MCF 10A (cell line): ENCODE measurements at regions of chr1 and their contacts with region 1.

Region 1: DNA sequence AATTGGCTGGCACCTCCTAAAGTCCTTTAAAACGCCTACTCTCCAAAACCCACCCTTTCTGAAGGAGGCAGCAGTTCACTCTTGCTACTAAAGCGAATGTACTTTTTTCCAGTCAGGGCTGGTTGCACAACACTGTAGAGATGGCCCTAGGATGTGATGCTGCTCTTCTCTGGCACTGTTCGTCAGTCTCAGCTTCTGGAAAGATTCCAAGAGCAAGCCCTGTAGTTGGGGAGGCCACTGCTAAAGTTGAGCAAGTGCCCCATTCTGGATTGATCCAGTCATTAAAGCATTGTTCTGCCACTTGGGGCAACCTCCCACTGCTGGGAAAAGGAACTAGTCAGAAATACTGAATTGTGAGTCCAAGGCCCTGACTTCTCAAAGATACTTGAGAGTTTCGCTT is 28.5 kb upstream of the KCNQ4 start:
- DNase-seq: peak; percentile 96
- H3K4me3 Mint-ChIP-seq: no peak overlapping the region
- H3K27ac Mint-ChIP-seq: peak overlapping the region; percentile 53
- H3K4me1 Mint-ChIP-seq: peaks cover 29% of the 10 kb centered on the region
- H3K27me3 Mint-ChIP-seq: no peaks in the 10 kb centered on the region
- CTCF ChIP-seq: no peak

Region 2: DNA sequence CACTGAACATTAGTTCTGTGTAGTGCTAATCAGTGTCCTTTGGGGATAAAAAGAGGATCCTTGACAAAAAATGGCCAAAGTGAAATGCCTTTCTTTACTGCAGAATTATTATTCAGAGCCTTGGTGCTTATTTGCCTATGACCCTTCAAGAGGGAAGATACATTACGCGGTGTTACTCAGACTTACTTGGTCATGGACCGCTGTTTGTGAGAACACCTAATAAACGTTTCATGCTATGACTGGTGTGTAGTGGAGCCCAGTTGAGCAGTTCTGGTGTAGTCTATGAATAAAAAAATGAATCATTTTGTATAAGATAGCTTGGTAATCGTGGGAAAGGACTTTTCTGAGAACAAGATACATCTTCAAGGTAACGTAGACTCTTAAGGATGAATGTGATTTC is 55.3 kb before region 1 on chr1:
- CTCF ChIA-PET with region 1: no interaction called
- POLR2A ChIA-PET with region 1: interaction called, 3 read pairs
- intact Hi-C with region 1: loop called (anchors 5 kb)
- DNase-seq: no peak
- H3K4me3 Mint-ChIP-seq: no peak overlapping the region
- H3K27ac Mint-ChIP-seq: peak overlapping the region; percentile 79
- H3K4me1 Mint-ChIP-seq: peaks cover 17% of the 10 kb centered on the region
- H3K27me3 Mint-ChIP-seq: no peaks in the 10 kb centered on the region
- CTCF ChIP-seq: no peak